MCF 10A (cell line): ENCODE measurements at regions of chr11 and their contacts with region 1.

Region 1: GRCh38 chr11:130434521-130435223 is 6.3 kb upstream of the ADAMTS8 start:
- DNase-seq: peak; percentile 84
- H3K4me3 Mint-ChIP-seq: no peak overlapping the region
- H3K27ac Mint-ChIP-seq: no peak overlapping the region
- H3K4me1 Mint-ChIP-seq: peaks cover 12% of the 10 kb centered on the region
- H3K27me3 Mint-ChIP-seq: peaks cover 20% of the 10 kb centered on the region
- CTCF ChIP-seq: peak; percentile 88

Region 2: DNA sequence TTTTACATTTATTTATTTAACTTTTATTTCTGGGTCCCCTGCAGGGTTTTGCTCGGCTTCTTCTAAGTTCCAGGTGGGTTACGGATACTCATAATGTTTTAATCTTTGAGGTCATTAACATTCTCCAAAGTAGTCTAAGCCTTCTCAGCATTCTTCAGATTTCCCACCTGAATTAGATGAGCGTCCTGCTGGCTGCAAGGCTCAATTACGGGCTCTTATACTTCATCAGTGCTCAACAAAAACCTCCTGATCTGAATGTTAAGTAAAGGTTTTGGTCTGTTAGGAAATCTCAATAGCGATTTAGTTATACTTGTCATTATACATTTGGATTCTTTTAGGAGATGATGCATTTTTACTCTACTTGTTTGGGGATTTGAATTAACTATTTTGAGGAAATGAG is 512.0 kb before region 1 on chr11:
- CTCF ChIA-PET with region 1: no interaction called
- POLR2A ChIA-PET with region 1: no interaction called
- intact Hi-C with region 1: loop called (anchors 10 kb)
- DNase-seq: no peak
- H3K4me3 Mint-ChIP-seq: no peak overlapping the region
- H3K27ac Mint-ChIP-seq: no peak overlapping the region
- H3K4me1 Mint-ChIP-seq: peaks cover 5% of the 10 kb centered on the region
- H3K27me3 Mint-ChIP-seq: no peaks in the 10 kb centered on the region
- CTCF ChIP-seq: no peak

Region 3: GRCh38 chr11:130420478-130421198 is 14.0 kb before region 1 on chr11:
- CTCF ChIA-PET with region 1: interaction called, 38 read pairs
- POLR2A ChIA-PET with region 1: no interaction called
- intact Hi-C with region 1: no loop called
- DNase-seq: peak; percentile 46
- H3K4me3 Mint-ChIP-seq: no peak overlapping the region
- H3K27ac Mint-ChIP-seq: no peak overlapping the region
- H3K4me1 Mint-ChIP-seq: no peaks in the 10 kb centered on the region
- H3K27me3 Mint-ChIP-seq: peaks cover 28% of the 10 kb centered on the region
- CTCF ChIP-seq: no peak

Region 4: GRCh38 chr11:130549393-130549999 is 114.8 kb after region 1 on chr11:
- CTCF ChIA-PET with region 1: interaction called, 7 read pairs
- POLR2A ChIA-PET with region 1: no interaction called
- intact Hi-C with region 1: loop called (anchors 1 kb)
- DNase-seq: peak; percentile 29
- H3K4me3 Mint-ChIP-seq: no peak overlapping the region
- H3K27ac Mint-ChIP-seq: no peak overlapping the region
- H3K4me1 Mint-ChIP-seq: peaks cover 4% of the 10 kb centered on the region
- H3K27me3 Mint-ChIP-seq: no peaks in the 10 kb centered on the region
- CTCF ChIP-seq: no peak

Region 5: DNA sequence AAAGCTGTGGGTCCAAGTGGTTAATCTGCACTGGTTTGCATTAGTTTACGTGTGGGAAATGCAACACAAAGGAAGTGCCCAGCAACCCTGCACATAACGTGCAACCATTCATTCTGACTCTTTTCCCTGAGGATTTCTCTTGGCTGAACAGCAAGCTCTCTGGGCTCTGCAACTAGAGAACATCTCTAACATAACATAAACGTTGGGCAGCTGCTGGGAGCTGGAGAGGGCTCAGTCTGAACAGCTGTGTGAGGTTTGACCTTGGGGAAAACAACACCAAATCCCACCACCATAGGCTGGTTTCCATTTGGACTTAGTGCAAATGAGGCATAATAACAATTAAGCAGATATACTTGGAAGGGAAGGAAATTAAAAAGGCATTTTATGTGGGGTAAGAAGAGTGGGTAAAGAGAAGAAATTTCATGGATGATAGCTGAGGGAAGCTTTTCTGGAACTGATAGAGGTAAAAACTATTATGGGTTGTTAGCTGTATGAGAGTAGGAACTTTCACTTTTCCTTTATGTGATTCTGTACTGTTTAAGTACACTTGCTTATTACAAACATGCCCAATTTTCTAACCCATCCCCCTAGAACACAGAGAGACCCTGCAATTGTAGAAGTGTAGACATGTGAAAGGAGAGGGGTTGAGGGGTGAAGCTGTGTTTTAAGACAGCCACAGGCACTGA is 405.5 kb after region 1 on chr11:
- CTCF ChIA-PET with region 1: interaction called, 18 read pairs
- POLR2A ChIA-PET with region 1: no interaction called
- intact Hi-C with region 1: loop called (anchors 5 kb)
- DNase-seq: no peak
- H3K4me3 Mint-ChIP-seq: no peak overlapping the region
- H3K27ac Mint-ChIP-seq: no peak overlapping the region
- H3K4me1 Mint-ChIP-seq: no peaks in the 10 kb centered on the region
- H3K27me3 Mint-ChIP-seq: no peaks in the 10 kb centered on the region
- CTCF ChIP-seq: no peak

Region 6: DNA sequence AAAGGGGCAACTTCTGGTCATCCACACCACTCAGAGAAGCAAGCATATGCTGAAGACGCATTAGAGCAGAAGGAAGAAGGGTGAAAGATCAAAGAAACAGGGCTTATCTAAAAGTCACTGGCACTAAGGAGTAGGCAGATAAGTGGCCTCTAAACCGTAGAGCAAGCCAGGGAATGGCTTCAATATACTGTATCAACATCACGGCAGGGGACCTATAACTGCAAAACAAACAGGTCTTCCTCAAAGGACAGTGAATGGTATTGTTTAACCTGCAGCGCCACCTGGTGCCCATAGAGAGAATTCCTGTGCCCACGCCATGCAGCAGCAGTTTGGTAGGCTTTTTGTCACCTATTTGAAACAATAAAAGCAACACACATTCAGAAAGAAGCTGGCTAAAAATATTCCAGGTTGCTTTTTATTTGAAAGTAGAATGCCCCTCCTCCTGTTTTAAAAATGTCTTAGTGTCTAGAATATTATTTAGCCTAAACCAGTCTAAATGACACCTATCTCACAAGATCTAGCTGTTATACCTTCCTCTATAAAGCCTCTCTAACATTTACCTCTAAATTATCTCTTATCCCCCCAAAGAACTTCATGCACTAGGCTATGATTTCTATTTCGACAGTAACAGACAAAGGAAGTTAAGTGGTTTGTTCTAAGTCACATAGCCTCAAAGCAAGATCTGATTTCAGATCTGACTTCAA is 459.8 kb after region 1 on chr11:
- CTCF ChIA-PET with region 1: interaction called, 132 read pairs
- POLR2A ChIA-PET with region 1: no interaction called
- intact Hi-C with region 1: loop called (anchors 1 kb)
- DNase-seq: peak; percentile 85
- H3K4me3 Mint-ChIP-seq: no peak overlapping the region
- H3K27ac Mint-ChIP-seq: no peak overlapping the region
- H3K4me1 Mint-ChIP-seq: peaks cover 15% of the 10 kb centered on the region
- H3K27me3 Mint-ChIP-seq: no peaks in the 10 kb centered on the region
- CTCF ChIP-seq: peak; percentile 70